ENCODE measurements at regions of chr6 and their contacts with region 1.

Region 1: GRCh38 chr6:118551063-118552053 is 3.3 kb downstream of the PLN start:
- DNase-seq: no peak
- H3K4me3 ChIP-seq: peak overlapping the region; percentile 53 to 69
- H3K27ac ChIP-seq: peak overlapping the region; percentile 83 to 89
- H3K4me1 ChIP-seq: no peaks in the 10 kb centered on the region
- H3K27me3 ChIP-seq: no peaks in the 10 kb centered on the region
- CTCF ChIP-seq: peak; percentile 57 to 69 (median 64)

Region 2: DNA sequence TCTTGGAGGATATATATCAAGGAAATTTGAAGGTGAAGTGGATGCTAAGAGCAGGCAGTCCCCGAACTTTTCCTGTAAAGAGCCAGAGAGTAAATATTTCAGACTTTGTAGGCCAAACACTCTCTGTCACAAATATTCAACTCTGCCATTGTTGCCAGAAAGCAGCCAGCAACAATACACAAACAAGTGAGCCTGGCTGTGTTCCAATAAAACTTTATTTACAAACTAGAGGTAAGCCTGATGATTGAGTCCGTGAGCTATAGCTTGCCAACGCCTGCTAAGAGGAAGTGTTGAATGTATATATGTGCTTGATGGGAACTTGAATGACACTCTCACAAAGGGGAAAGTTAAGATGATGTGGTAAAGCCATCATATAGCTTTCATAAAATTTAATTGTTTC is 169.2 kb before region 1 on chr6:
- intact Hi-C with region 1: loop called (anchors 5 kb)
- DNase-seq: no peak
- H3K4me3 ChIP-seq: no peak overlapping the region
- H3K27ac ChIP-seq: peak overlapping the region; percentile 42 to 70
- H3K4me1 ChIP-seq: no peaks in the 10 kb centered on the region
- H3K27me3 ChIP-seq: no peaks in the 10 kb centered on the region
- CTCF ChIP-seq: no peak

Region 3: DNA sequence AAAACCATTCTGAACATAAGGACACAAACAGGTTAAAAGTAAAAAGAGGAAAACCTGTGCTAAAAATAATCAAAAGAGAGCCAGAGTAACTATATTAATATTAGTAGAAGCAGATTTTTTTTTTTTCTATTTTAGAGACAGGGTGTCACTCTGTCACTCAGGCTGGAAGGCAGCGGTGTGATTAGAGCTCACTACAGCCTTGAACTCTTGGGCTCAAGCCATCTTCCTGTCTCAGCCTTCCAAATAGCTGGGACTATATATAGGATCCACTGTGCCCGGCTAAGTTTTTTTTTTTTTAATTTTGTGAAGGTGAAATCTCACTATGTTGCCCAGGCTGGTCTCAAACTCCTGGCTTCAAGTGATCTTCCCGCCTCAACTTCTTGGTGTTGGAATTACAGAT is 36.7 kb before region 1 on chr6:
- intact Hi-C with region 1: loop called (anchors 2 kb)
- DNase-seq: no peak
- H3K4me3 ChIP-seq: no peak overlapping the region
- H3K27ac ChIP-seq: peak overlapping the region; percentile 33 to 51
- H3K4me1 ChIP-seq: peaks cover 0 to 5% of the 10 kb centered on the region in 2 donors
- H3K27me3 ChIP-seq: no peaks in the 10 kb centered on the region
- CTCF ChIP-seq: no peak

Region 4: GRCh38 chr6:118525913-118526785 is 25.2 kb before region 1 on chr6:
- intact Hi-C with region 1: no loop called
- DNase-seq: no peak
- H3K4me3 ChIP-seq: no peak overlapping the region
- H3K27ac ChIP-seq: no peak overlapping the region
- H3K4me1 ChIP-seq: peaks cover 3 to 21% of the 10 kb centered on the region in 2 donors
- H3K27me3 ChIP-seq: no peaks in the 10 kb centered on the region
- CTCF ChIP-seq: no peak